ENCODE measurements at regions of chr9 and their contacts with region 1.

Region 1: DNA sequence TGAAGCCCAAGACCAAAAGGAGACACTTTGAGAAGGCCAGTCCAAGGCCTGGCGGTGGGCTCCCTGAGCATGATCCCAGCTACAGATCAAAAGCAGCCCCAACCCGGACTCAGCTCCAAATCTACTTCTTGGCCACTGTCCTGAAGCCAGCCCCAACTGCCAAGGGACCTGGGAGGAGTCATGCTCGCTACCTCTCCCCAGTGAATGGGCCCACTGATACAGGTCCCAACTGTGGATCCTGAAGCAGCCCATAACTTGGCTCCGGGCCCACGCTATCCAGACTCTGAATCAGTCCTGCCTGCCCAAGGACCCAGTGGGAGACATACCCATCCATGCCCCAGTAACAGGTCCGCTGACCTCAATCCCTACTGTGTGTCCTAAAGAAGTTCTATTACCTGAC is 1545.3 kb upstream of the C9orf72 start:
- DNase-seq: no peak
- H3K4me3 ChIP-seq: no peak overlapping the region
- H3K27ac ChIP-seq: no peak overlapping the region
- H3K4me1 ChIP-seq: no peaks in the 10 kb centered on the region
- H3K27me3 ChIP-seq: no peaks in the 10 kb centered on the region
- CTCF ChIP-seq: no peak
- EP300 ChIP-seq: no peak
- POLR2A ChIP-seq: no peak

Region 2: GRCh38 chr9:29006628-29007027 is 111.9 kb before region 1 on chr9:
- in situ Hi-C with region 1: loop called in 1 of 4 experiments (anchors 25 kb)
- intact Hi-C with region 1: no loop called
- DNase-seq: no peak
- H3K4me3 ChIP-seq: no peak overlapping the region
- H3K27ac ChIP-seq: no peak overlapping the region
- H3K4me1 ChIP-seq: no peaks in the 10 kb centered on the region
- H3K27me3 ChIP-seq: no peaks in the 10 kb centered on the region
- CTCF ChIP-seq: no peak
- EP300 ChIP-seq: no peak
- POLR2A ChIP-seq: no peak

Measured in transverse colon (tissue), 4 donors.